Breast epithelium (tissue), 4 donors: ENCODE measurements at regions of chr16 and their contacts with region 1.

Region 1: GRCh38 chr16:56931892-56932720 is at the start of gene HERPUD1:
- DNase-seq: peak; percentile 98 to 99
- H3K4me3 ChIP-seq: peak within 1 kb of the TSS; percentile 92 to 99 (median 98)
- H3K27ac ChIP-seq: peak within 1 kb of the TSS; percentile 99
- H3K4me1 ChIP-seq: peaks cover 0 to 9% of the 10 kb centered on the region in 2 donors
- H3K27me3 ChIP-seq: no peaks in the 10 kb centered on the region
- CTCF ChIP-seq: peak; percentile 4 to 16 (median 9)
- POLR2A ChIP-seq: peak; percentile 96
- total RNA-seq, gene HERPUD1: 123 to 162 (median 149) TPM

Region 2: GRCh38 chr16:56281256-56281805 is 650.8 kb before region 1 on chr16:
- intact Hi-C with region 1: no loop called
- DNase-seq: no peak
- H3K4me3 ChIP-seq: no peak overlapping the region
- H3K27ac ChIP-seq: no peak overlapping the region
- H3K4me1 ChIP-seq: no peaks in the 10 kb centered on the region
- H3K27me3 ChIP-seq: no peaks in the 10 kb centered on the region
- CTCF ChIP-seq: no peak
- POLR2A ChIP-seq: no peak

Region 3: GRCh38 chr16:56869513-56870275 is 62.4 kb before region 1 on chr16:
- intact Hi-C with region 1: loop called (anchors 2 kb)
- DNase-seq: no peak
- H3K4me3 ChIP-seq: no peak overlapping the region
- H3K27ac ChIP-seq: no peak overlapping the region
- H3K4me1 ChIP-seq: no peaks in the 10 kb centered on the region
- H3K27me3 ChIP-seq: no peaks in the 10 kb centered on the region
- CTCF ChIP-seq: no peak
- POLR2A ChIP-seq: no peak